ENCODE measurements at regions of chr4 and their contacts with region 1.

Region 1: DNA sequence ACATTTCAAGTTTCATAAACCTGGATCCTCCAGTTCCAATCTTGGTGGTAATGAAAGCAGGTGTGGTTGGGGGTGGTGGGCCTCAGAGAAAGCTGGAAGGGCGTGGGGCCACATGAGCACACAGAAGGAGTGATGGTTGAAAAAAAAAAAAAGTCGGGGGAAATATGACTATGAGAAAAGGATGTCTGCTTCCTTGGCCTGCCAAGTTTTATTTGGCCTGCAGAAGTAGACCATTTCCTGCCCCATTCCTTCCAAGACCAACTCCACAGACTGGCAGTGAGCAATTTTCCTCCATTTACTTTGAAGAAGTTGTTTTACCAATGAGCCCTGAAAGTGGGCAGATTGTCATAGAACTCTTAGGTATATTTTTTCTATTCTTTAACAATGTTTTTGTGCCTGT is 43.3 kb downstream of the LNX1 start:
- DNase-seq: peak; percentile 81
- H3K4me3 ChIP-seq: no peak overlapping the region
- H3K27ac ChIP-seq: no peak overlapping the region
- H3K4me1 ChIP-seq: peaks cover 22% of the 10 kb centered on the region
- H3K27me3 ChIP-seq: no peaks in the 10 kb centered on the region
- CTCF ChIP-seq: no peak
- POLR2A ChIP-seq: no peak

Region 2: GRCh38 chr4:53592686-53593501 is 44.9 kb after region 1 on chr4:
- CTCF ChIA-PET with region 1: no interaction called
- POLR2A ChIA-PET with region 1: no interaction called
- dilution Hi-C with region 1: no loop called
- intact Hi-C with region 1: loop called (anchors 2 kb)
- DNase-seq: peak; percentile 46
- H3K4me3 ChIP-seq: peak overlapping the region; percentile 26 to 73 (median 29)
- H3K27ac ChIP-seq: peak overlapping the region; percentile 44
- H3K4me1 ChIP-seq: peaks cover 9% of the 10 kb centered on the region
- H3K27me3 ChIP-seq: no peaks in the 10 kb centered on the region
- CTCF ChIP-seq: no peak
- POLR2A ChIP-seq: no peak

Measured in endothelial cell of umbilical vein (primary cell).